Gastrocnemius medialis (tissue), 4 donors: ENCODE measurements at regions of chr19 and their contacts with region 1.

Region 1: GRCh38 chr19:21474671-21475181 is 30.7 kb upstream of the ZNF429 start:
- DNase-seq: peak in 1 of 2 donors; percentile 51
- ATAC-seq: peak in 1 of 2 donors; percentile 83
- H3K4me3 ChIP-seq: peak overlapping the region; percentile 30 to 67 (median 50)
- H3K27ac ChIP-seq: no peak overlapping the region
- H3K4me1 ChIP-seq: no peaks in the 10 kb centered on the region
- H3K27me3 ChIP-seq: peaks cover 0 to 10% (median 7%) of the 10 kb centered on the region in 3 donors
- CTCF ChIP-seq: no peak
- POLR2A ChIP-seq: no peak

Region 2: GRCh38 chr19:21362291-21362690 is 112.4 kb before region 1 on chr19:
- in situ Hi-C with region 1: no loop called
- intact Hi-C with region 1: no loop called
- DNase-seq: no peak
- ATAC-seq: no peak
- H3K4me3 ChIP-seq: no peak overlapping the region
- H3K27ac ChIP-seq: no peak overlapping the region
- H3K4me1 ChIP-seq: peaks cover 0 to 4% of the 10 kb centered on the region in 2 donors
- H3K27me3 ChIP-seq: no peaks in the 10 kb centered on the region
- CTCF ChIP-seq: no peak
- POLR2A ChIP-seq: no peak

Region 3: DNA sequence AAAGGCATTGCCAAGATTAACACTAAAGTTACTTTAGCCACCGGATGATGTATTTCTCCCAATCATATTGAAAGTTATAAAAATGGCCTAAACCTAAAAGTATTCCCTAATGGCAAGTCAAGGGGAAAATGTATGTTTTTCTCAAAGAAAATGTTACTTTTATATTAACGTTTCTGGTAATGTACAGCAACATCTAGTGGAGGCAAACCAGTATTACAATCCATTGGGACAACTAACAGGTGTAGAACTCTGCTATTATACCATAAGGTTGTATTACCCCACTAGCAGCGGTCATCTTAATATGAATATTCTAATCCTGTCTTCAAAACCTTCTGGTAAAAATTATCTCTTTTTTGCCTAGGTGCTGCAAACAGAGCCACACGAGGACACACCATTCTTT is 223.5 kb after region 1 on chr19:
- in situ Hi-C with region 1: loop called in 1 of 4 experiments (anchors 25 kb)
- intact Hi-C with region 1: no loop called
- DNase-seq: no peak
- ATAC-seq: peak in 1 of 2 donors; percentile 49
- H3K4me3 ChIP-seq: no peak overlapping the region
- H3K27ac ChIP-seq: no peak overlapping the region
- H3K4me1 ChIP-seq: no peaks in the 10 kb centered on the region
- H3K27me3 ChIP-seq: no peaks in the 10 kb centered on the region
- CTCF ChIP-seq: peak in 4 of 5 experiments; percentile 24 to 61 (median 48)
- POLR2A ChIP-seq: no peak